AG04450 (cell line): ENCODE measurements at regions of chr5 and their contacts with region 1.

Region 1: DNA sequence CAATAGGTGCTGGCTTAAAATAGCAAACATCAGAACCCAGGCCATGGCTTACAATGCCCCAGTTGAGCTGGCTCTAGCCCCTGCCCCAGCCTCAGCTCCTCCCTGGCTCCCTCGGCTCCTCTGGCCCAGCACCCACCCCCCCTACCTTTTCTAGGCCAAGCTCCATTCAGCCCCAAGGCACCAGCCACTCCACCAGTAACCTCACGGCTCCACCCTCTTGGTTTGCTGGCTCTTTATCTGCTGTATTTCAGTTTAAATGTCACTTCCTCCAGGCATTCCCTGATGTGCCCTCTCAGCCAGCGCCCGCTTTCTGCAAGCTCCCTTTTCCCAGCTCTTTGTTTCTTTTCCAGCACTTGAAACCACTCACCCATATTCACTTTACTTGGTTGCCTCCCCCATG is 10.6 kb downstream of the C1QTNF2 start:
- DNase-seq: no peak
- H3K4me3 ChIP-seq: no peak overlapping the region
- H3K27ac ChIP-seq: no peak overlapping the region
- H3K27me3 ChIP-seq: no peaks in the 10 kb centered on the region
- CTCF ChIP-seq: no peak

Region 2: GRCh38 chr5:160324886-160325285 is 34.9 kb before region 1 on chr5:
- CTCF ChIA-PET with region 1: no interaction called
- POLR2A ChIA-PET with region 1: no interaction called
- DNase-seq: no peak
- H3K4me3 ChIP-seq: no peak overlapping the region
- H3K27ac ChIP-seq: no peak overlapping the region
- H3K27me3 ChIP-seq: peaks cover 11% of the 10 kb centered on the region
- CTCF ChIP-seq: no peak

Region 3: GRCh38 chr5:160342403-160342941 is 17.3 kb before region 1 on chr5:
- CTCF ChIA-PET with region 1: interaction called, 11 read pairs
- POLR2A ChIA-PET with region 1: interaction called, 3 read pairs
- DNase-seq: no peak
- H3K4me3 ChIP-seq: no peak overlapping the region
- H3K27ac ChIP-seq: no peak overlapping the region
- H3K27me3 ChIP-seq: no peaks in the 10 kb centered on the region
- CTCF ChIP-seq: no peak

Region 4: DNA sequence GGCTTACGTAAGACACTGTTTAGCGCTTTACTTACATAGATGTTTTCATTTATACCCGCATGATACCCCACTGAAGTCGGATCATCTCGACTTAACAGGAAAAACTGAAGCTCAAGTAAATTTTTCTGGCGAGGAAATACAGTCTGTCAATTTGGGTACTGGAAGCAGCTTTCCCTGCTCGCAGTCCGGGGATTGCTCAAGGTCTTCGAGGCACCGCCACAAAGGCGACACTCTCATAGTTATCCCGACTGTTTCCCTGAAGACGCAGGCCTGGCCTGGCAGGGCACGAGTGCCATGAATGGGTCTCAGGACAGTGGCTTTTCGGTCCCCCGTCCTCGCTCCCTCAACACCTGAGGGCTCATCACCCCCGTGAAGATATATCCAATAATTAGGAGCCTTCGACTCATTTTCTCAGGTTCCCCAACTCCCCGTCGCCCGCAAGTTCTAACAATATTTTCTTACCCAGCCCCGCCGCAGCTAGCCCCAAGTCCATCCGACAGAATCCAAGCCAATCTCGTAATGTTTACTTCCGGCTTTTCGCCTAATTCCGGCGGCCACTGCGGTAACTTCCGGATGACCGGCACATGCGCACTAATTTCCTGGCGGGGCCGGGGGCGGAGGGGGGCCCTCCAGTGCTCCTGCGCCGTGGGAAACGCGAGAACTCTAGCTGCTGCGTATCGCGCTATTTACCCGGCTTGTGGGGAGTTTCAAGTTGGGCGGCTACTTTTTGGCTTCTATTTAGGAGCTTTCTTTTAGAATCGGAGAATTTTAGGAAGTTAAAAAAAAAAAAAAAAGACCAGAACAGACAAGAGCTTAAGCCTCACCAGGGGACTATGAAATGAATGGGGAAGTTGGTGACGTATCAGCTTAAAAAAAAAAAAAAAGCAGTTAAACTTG is 59.0 kb after region 1 on chr5 and contains the start of gene SLU7:
- CTCF ChIA-PET with region 1: no interaction called
- POLR2A ChIA-PET with region 1: no interaction called
- DNase-seq: peak; percentile 92
- H3K4me3 ChIP-seq: peak within 1 kb of the TSS; percentile 99
- H3K27ac ChIP-seq: peak within 1 kb of the TSS; percentile 58
- H3K27me3 ChIP-seq: no peaks in the 10 kb centered on the region
- CTCF ChIP-seq: no peak
- polyA plus RNA-seq, gene SLU7: 32.9 and 59.5 TPM in 2 replicates

Region 5: DNA sequence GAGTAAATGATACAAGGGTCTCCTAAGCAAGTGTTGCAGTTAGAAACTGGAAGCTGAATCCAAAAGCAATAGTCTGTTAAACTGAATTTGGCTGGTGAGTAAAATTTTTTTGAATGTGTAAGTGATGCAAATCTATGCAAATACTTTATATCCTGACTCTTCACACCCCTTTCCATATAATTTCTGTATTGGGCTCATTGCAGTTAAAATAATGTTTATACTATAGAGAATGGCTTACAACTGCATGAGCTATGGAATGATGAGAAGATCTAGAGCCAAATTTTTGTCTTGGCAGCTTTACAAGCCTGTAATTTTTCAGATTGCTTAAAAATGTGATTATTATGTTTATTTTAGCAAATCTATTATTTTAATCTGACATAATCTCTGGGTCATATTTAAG is 1431.1 kb after region 1 on chr5:
- CTCF ChIA-PET with region 1: no interaction called
- POLR2A ChIA-PET with region 1: no interaction called
- DNase-seq: no peak
- H3K4me3 ChIP-seq: no peak overlapping the region
- H3K27ac ChIP-seq: no peak overlapping the region
- H3K27me3 ChIP-seq: no peaks in the 10 kb centered on the region
- CTCF ChIP-seq: no peak